Activated CD4-positive, alpha-beta memory T cell treated with anti-CD3 and anti-CD28 coated beads for 36 hours (primary cell): ENCODE measurements at regions of chr2 and their contacts with region 1.

Region 1: GRCh38 chr2:102082571-102083392 is 59.8 kb upstream of the IL1R1 start:
- DNase-seq: peak; percentile 80
- H3K4me3 Mint-ChIP-seq: peak overlapping the region; percentile 57
- H3K27ac Mint-ChIP-seq: peak overlapping the region; percentile 92
- H3K4me1 Mint-ChIP-seq: peaks cover 64% of the 10 kb centered on the region
- H3K27me3 Mint-ChIP-seq: no peaks in the 10 kb centered on the region

Region 2: DNA sequence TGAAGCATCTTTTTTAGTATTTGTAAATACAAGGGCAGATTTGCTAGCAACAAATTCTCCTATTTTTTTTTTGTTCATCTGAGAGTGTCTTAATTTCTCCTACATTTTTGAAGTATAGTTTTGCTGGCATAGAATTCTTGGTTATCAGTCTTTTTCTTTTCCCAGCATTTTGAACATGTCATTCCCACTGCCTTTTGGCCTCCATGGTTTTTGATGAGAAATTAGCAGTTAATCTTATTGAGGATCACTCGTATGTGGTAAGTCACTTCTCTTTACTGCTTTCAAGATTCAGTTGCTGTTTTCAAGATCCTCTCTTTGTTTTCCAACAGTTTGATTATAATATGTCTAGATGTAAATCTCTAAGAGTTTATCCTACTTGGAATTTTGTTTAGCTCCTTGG is 757.4 kb before region 1 on chr2:
- CTCF ChIA-PET with region 1: no interaction called
- POLR2A ChIA-PET with region 1: no interaction called
- intact Hi-C with region 1: no loop called
- DNase-seq: no peak
- H3K4me3 Mint-ChIP-seq: no peak overlapping the region
- H3K27ac Mint-ChIP-seq: no peak overlapping the region
- H3K4me1 Mint-ChIP-seq: peaks cover 16% of the 10 kb centered on the region
- H3K27me3 Mint-ChIP-seq: no peaks in the 10 kb centered on the region

Region 3: DNA sequence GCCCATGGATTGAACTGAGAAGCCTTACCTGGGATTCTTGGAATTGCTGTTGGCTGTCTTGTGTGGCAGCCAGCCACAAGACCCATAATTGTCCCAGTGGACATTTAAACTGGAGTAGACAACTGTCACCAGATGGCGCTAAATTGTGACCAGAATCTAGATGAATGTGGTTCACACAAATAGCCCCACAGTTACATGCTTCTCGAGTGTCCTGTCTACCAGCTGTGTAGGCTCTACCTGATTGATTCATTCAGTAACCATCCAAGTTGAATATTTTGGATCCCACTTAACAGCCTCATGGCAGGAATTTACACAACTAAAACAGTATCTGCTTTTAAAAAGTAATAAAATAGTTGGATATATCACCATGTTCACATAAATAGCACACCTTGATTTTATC is 312.1 kb before region 1 on chr2:
- CTCF ChIA-PET with region 1: no interaction called
- POLR2A ChIA-PET with region 1: no interaction called
- intact Hi-C with region 1: no loop called
- DNase-seq: peak; percentile 21
- H3K4me3 Mint-ChIP-seq: no peak overlapping the region
- H3K27ac Mint-ChIP-seq: no peak overlapping the region
- H3K4me1 Mint-ChIP-seq: peaks cover 82% of the 10 kb centered on the region
- H3K27me3 Mint-ChIP-seq: no peaks in the 10 kb centered on the region

Region 4: DNA sequence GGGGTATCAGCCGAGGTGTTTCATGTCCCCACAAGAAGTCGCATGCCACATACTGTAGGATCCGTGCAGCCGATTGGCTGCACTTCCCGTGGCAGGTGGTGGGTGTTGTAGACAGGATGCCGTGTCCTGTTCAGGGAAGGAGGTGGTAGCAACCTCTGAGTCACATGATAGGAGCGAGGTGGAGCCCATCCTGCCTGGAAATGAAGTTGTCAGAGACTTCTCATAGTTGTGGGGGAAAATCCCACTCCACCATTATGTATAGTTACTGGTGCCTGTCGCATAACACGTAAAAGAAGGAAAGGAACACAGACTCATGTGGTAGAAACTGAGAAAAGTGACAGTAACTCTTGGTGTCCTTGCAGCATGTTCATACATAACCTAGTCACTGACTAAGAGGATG is 182.4 kb before region 1 on chr2:
- CTCF ChIA-PET with region 1: no interaction called
- POLR2A ChIA-PET with region 1: no interaction called
- intact Hi-C with region 1: loop called (anchors 2 kb)
- DNase-seq: peak; percentile 88
- H3K4me3 Mint-ChIP-seq: peak overlapping the region; percentile 56
- H3K27ac Mint-ChIP-seq: peak overlapping the region; percentile 93
- H3K4me1 Mint-ChIP-seq: peaks cover 40% of the 10 kb centered on the region
- H3K27me3 Mint-ChIP-seq: peaks cover 15% of the 10 kb centered on the region

Region 5: DNA sequence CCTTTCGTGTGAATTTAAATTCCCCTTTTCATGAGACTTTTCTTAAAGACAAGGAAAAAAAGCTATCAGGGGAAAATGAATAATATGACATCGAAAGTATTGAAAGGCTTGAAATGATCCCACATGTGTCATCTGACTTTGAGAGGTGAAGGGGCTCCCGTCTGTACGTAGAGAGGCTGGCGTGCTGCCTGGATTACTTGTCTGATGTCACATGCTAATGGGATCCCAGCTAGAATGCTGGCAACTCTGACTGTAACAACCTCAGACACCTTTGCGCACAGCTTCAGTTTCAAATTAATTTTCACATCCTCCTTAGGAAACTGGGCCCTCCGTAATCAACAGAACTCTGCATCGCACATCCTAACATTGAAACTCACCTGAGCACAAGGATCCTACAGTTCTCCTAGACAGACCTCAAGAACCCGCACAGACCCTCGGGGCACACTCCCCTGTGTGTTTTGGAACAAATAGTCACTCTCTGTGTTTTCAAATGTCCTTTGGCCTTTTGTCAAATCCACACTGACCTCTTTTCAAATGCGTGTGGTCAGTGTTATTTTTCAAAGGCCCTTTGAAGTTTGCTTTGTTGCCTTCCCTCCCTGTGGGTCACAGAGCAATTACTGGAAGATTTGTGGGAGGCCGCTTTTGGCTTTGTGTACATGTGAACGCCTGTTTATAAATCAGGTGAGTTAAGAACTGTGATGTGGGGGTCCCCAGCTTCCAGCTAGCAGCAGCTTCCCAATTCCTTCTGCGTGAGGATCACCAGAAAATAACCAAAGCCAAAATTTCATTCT is 25.1 kb before region 1 on chr2:
- CTCF ChIA-PET with region 1: interaction called, 19 read pairs
- POLR2A ChIA-PET with region 1: interaction called, 76 read pairs
- intact Hi-C with region 1: loop called (anchors 1 kb)
- DNase-seq: peak; percentile 73
- H3K4me3 Mint-ChIP-seq: no peak overlapping the region
- H3K27ac Mint-ChIP-seq: peak overlapping the region; percentile 31
- H3K4me1 Mint-ChIP-seq: peaks cover 33% of the 10 kb centered on the region
- H3K27me3 Mint-ChIP-seq: no peaks in the 10 kb centered on the region

Region 6: DNA sequence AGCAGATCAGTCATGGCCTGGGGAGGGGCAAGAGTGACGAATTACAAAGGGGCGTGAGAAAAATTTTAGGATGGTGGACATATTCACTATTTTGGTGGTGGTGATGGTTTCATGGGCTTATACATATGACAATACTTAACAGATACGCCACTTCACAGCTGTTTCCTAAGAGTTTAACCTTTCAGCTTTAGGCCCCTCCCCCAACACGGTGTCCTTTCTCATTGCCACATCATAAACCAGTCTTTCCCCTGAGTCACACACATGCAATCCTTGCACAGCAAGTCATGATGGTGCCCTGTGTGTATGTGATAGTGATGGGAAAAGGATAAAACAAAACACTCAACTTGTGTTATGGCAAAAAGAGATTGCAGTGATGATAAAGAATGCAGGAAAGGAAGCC is 12.1 kb after region 1 on chr2:
- CTCF ChIA-PET with region 1: interaction called, 4 read pairs
- POLR2A ChIA-PET with region 1: interaction called, 14 read pairs
- intact Hi-C with region 1: loop called (anchors 1 kb)
- DNase-seq: peak; percentile 70
- H3K4me3 Mint-ChIP-seq: no peak overlapping the region
- H3K27ac Mint-ChIP-seq: peak overlapping the region; percentile 1
- H3K4me1 Mint-ChIP-seq: peaks cover 10% of the 10 kb centered on the region
- H3K27me3 Mint-ChIP-seq: peaks cover 5% of the 10 kb centered on the region

Region 7: DNA sequence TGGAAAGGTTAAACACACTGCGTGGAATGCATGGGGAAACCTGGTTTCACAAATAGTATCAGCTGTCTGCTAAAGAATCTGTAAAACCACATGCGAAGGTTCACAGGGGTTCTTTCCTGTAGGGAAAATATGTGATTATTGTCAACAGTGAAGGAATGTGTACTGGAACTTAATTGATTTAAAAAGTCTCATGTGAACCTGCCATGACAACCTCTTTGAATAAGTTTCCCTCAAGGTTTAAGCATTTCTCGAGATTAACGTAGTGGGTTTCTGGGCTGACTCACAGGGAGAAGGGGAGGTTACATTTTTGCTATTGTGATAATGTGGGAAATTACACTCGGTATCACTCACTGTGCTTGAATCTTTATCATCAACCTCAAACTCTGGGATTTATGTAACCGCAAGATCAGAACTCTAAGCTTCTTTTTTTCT is 31.5 kb after region 1 on chr2:
- CTCF ChIA-PET with region 1: interaction called, 4 read pairs
- POLR2A ChIA-PET with region 1: interaction called, 5 read pairs
- intact Hi-C with region 1: loop called (anchors 1 kb)
- DNase-seq: peak; percentile 58
- H3K4me3 Mint-ChIP-seq: no peak overlapping the region
- H3K27ac Mint-ChIP-seq: peak overlapping the region; percentile 59
- H3K4me1 Mint-ChIP-seq: peaks cover 73% of the 10 kb centered on the region
- H3K27me3 Mint-ChIP-seq: peaks cover 12% of the 10 kb centered on the region

Region 8: DNA sequence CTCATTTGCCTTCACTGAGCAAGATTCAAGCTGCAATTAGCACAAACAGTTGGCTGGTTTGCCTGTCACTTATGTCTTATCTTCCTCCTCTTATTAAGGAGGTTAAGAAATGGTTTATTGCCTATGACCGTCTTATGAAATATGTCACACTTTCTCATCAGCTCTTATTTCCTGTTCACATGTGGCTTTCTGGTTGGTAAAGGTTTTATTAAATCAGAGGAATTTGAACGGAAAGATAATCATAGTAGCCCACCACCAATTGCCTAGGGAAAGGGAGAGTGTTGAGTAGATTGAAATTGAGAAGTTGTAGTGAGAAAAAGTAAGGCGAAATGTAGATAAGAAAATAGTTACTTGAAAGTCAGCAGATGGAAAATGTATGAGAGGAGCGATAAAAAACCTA is 55.5 kb after region 1 on chr2:
- CTCF ChIA-PET with region 1: interaction called, 5 read pairs
- POLR2A ChIA-PET with region 1: interaction called, 11 read pairs
- intact Hi-C with region 1: loop called (anchors 1 kb)
- DNase-seq: no peak
- H3K4me3 Mint-ChIP-seq: no peak overlapping the region
- H3K27ac Mint-ChIP-seq: peak overlapping the region; percentile 70
- H3K4me1 Mint-ChIP-seq: peaks cover 59% of the 10 kb centered on the region
- H3K27me3 Mint-ChIP-seq: peaks cover 24% of the 10 kb centered on the region

Region 9: DNA sequence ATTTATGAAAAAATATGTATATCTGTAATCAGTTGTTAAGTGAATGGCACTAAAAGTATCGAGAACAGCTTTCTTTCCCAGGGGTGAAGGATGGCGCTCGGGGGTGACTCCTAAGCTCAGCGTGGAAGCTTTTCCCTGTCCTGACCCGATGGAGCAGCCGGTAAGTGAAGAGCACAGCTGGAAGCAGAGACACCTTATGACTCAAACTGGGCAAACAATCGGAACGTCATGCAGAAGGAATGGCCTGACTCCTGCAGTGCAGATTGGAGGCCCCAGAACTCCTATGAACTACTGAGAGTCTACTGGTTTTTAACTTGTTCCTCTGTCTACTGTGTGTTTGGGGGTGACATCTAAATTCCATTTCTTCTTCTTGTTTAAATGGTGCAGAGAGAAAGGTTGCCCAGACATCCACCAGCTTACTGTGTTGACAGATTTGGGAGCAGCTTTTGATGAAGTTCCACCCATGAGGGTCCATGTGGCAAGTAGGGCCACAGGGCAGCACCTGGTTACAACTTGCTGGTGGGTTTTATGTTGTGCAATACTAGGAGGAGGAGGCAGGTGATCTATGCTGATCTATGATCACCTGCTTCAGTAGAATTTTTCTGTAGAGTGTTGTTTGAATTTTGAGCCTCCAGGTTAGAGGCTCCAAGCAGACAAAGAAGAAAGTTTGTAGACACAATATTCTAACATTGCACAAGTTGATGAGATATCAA is 626.2 kb after region 1 on chr2:
- CTCF ChIA-PET with region 1: no interaction called
- POLR2A ChIA-PET with region 1: no interaction called
- intact Hi-C with region 1: no loop called
- DNase-seq: no peak
- H3K4me3 Mint-ChIP-seq: no peak overlapping the region
- H3K27ac Mint-ChIP-seq: no peak overlapping the region
- H3K4me1 Mint-ChIP-seq: no peaks in the 10 kb centered on the region
- H3K27me3 Mint-ChIP-seq: peaks cover 2% of the 10 kb centered on the region